ENCODE measurements at regions of chr22 and their contacts with region 1.

Region 1: GRCh38 chr22:23767673-23768548 is at the start of gene CHCHD10:
- DNase-seq: peak; percentile 90 to 93 (median 92)
- ATAC-seq: peak; percentile 73 to 83 (median 78)
- H3K4me3 ChIP-seq: peak within 1 kb of the TSS; percentile 79 to 85 (median 79)
- H3K27ac ChIP-seq: peak within 1 kb of the TSS; percentile 84 to 95 (median 95)
- H3K4me1 ChIP-seq: peaks cover 0 to 40% (median 12%) of the 10 kb centered on the region in 4 donors
- H3K27me3 ChIP-seq: no peaks in the 10 kb centered on the region
- CTCF ChIP-seq: peak; percentile 81 to 87 (median 83)
- POLR2A ChIP-seq: peak; percentile 92
- total RNA-seq, gene CHCHD10: 133 to 416 (median 252) TPM

Region 2: DNA sequence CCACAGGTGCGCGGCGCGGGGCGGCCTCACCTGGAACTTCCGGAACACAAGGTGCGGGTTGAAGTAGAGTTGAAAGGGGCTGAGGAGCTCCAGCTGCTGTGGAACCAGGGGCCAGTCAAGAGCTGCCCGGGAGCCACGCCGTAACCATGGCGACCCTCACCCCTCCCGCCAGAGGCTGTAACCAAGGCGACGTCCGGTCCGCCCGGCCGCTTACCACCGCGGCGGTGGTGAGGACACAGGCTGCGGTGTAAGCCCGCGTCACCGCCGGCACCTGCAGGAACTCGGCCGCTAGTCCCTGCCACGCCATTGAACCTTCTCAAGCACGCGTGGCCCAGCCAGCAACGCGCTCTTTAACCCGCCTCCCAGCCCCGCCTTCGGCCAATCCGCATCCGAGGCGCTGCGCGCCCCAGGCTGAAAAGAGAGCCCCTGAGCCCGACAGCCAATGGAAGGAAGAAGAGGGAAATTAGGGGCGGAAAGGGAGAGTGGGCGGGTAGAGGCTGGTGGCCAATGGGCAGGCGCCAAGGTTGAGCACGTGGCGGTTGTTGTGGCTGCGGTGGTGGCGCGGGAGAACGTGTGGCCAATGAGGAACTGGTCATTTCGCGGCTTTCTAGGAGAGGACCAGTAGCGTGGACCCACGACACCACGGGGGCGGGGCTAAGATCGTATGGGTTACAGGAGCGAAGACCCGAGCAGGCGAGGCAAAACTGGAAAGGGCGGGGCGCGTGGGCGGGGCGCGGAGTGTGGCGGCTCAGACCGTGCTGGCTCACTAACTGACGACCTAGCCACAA is 71.0 kb after region 1 on chr22 and contains the start of gene DERL3:
- intact Hi-C with region 1: no loop called
- DNase-seq: peak; percentile 98 to 99 (median 98)
- ATAC-seq: peak; percentile 89 to 93 (median 90)
- H3K4me3 ChIP-seq: peak within 1 kb of the TSS; percentile 42 to 56 (median 48)
- H3K27ac ChIP-seq: no peak within 1 kb of the TSS
- H3K4me1 ChIP-seq: peaks cover 0 to 7% (median 0%) of the 10 kb centered on the region in 4 donors
- H3K27me3 ChIP-seq: no peaks in the 10 kb centered on the region
- CTCF ChIP-seq: no peak
- POLR2A ChIP-seq: no peak
- total RNA-seq, gene DERL3: 1.1 to 7.1 (median 4.1) TPM

Region 3: GRCh38 chr22:23849009-23850006 is 81.4 kb after region 1 on chr22:
- intact Hi-C with region 1: loop called in 1 of 2 experiments (anchors 5 kb)
- DNase-seq: peak; percentile 84 to 86 (median 85)
- ATAC-seq: peak; percentile 86 to 95 (median 91)
- H3K4me3 ChIP-seq: peak overlapping the region; percentile 29 to 41 (median 32)
- H3K27ac ChIP-seq: no peak overlapping the region
- H3K4me1 ChIP-seq: peaks cover 0 to 11% (median 0%) of the 10 kb centered on the region in 4 donors
- H3K27me3 ChIP-seq: no peaks in the 10 kb centered on the region
- CTCF ChIP-seq: peak in 3 of 4 donors; percentile 98 to 99 (median 98)
- POLR2A ChIP-seq: no peak

Measured in right lobe of liver (tissue), 6 donors.